ENCODE measurements at regions of chrX and their contacts with region 1.

Region 1: GRCh38 chrX:9708904-9709553 is 56.6 kb downstream of the GPR143 start:
- DNase-seq: peak; percentile 61 to 73
- ATAC-seq: peak; percentile 76 to 85 (median 80)
- H3K4me3 ChIP-seq: no peak overlapping the region
- H3K27ac ChIP-seq: no peak overlapping the region
- H3K4me1 ChIP-seq: peaks cover 0 to 3% (median 0%) of the 10 kb centered on the region in 9 donors
- H3K27me3 ChIP-seq: no peaks in the 10 kb centered on the region
- CTCF ChIP-seq: peak; percentile 52 to 86 (median 84)

Region 2: GRCh38 chrX:8755116-8755515 is 953.9 kb before region 1 on chrX:
- intact Hi-C with region 1: loop called in 1 of 10 experiments (anchors 5 kb)
- DNase-seq: no peak
- ATAC-seq: no peak
- H3K4me3 ChIP-seq: no peak overlapping the region
- H3K27ac ChIP-seq: no peak overlapping the region
- H3K4me1 ChIP-seq: no peaks in the 10 kb centered on the region
- H3K27me3 ChIP-seq: peaks cover 0 to 20% (median 0%) of the 10 kb centered on the region in 7 donors
- CTCF ChIP-seq: no peak

Region 3: DNA sequence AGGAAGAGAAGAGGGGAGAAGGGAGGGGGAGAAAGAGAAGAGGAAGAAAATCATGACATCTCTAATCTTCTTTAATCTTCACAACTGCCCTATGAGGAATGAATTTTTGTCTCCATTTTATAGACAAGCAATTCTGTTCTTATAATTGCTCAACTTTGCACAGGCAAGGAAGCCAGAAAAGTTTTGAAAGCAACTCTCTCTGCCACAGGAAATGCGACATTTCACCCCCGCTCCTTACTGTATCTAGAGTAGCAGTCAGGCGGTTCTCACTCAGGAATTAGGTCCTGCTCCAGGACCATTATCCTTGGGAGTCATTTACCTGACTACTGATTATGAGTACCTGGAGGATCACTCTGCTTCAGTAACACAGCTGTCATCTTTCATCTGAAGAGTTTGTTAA is 838.6 kb before region 1 on chrX:
- intact Hi-C with region 1: loop called in 1 of 10 experiments (anchors 5 kb)
- DNase-seq: no peak
- ATAC-seq: no peak
- H3K4me3 ChIP-seq: no peak overlapping the region
- H3K27ac ChIP-seq: no peak overlapping the region
- H3K4me1 ChIP-seq: no peaks in the 10 kb centered on the region
- H3K27me3 ChIP-seq: peaks cover 0 to 32% (median 0%) of the 10 kb centered on the region in 7 donors
- CTCF ChIP-seq: no peak

Region 4: DNA sequence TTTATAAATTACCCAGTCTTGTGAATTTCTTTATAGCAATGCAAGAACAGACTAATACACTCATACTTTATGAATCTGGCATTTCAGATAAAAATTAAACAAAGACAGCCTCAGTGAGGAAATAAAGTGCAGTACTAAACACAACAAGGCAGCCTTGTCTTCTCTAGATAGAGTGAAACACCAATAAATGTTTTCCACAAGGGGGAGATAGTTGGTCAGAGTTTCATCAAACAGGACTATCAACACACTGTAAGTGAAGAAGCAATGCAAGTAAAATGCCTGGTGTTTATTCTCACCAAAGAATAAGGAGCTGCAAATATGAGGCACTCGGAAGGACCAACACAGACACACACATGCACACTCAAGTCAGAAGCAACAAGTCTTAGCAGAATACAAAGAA is 737.9 kb before region 1 on chrX:
- intact Hi-C with region 1: loop called in 6 of 10 experiments (anchors 5 to 10 kb)
- DNase-seq: no peak
- ATAC-seq: peak in 2 of 8 donors; percentile 47 to 50
- H3K4me3 ChIP-seq: no peak overlapping the region
- H3K27ac ChIP-seq: no peak overlapping the region
- H3K4me1 ChIP-seq: no peaks in the 10 kb centered on the region
- H3K27me3 ChIP-seq: peaks cover 0 to 32% (median 0%) of the 10 kb centered on the region in 7 donors
- CTCF ChIP-seq: peak in 8 of 9 donors; percentile 14 to 53 (median 36)

Region 5: DNA sequence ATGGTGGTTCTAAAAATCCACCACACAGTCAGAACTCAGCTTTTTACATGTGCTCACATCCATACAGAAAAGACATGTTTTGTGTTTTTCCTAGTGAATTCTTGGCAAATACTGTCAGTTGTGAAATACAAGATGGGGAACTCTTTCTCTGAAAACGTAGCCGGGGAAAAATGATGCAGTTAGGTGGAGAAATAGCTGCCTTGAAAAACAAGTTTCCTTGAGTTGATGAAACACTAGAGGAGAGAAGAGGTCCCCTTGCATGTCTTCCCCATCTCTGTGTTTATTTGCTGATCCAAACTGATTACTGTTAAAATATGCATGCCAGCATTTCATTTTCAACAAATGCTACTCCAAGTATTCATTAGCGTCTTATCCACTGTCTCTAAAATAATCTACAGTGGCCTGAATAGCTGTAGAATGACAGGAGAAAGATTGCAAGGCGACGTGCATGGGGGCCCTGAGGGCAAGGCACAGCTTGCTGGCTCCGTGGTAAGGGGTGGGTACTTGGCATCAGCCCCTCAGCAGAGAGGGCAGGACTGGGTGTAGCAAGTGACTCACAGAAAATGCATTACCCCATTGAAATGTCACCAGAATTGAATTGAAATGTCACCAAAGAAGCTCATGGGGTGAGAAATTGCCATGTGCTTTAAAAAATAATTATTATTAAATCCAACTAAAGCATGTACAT is 292.3 kb before region 1 on chrX:
- intact Hi-C with region 1: no loop called
- DNase-seq: no peak
- ATAC-seq: no peak
- H3K4me3 ChIP-seq: no peak overlapping the region
- H3K27ac ChIP-seq: no peak overlapping the region
- H3K4me1 ChIP-seq: peaks cover 0 to 4% (median 0%) of the 10 kb centered on the region in 9 donors
- H3K27me3 ChIP-seq: peaks cover 0 to 27% (median 0%) of the 10 kb centered on the region in 7 donors
- CTCF ChIP-seq: no peak

Measured in heart right ventricle (tissue), 16 donors.